Dendritic cell treated with granulocyte-macrophage colony-stimulating factor and Interleukin-4, amounts not matched to agents 40 ng/mL and 50 ng/mL, for 4 days (primary cell): ENCODE measurements at regions of chr6 and their contacts with region 1.

Region 1: DNA sequence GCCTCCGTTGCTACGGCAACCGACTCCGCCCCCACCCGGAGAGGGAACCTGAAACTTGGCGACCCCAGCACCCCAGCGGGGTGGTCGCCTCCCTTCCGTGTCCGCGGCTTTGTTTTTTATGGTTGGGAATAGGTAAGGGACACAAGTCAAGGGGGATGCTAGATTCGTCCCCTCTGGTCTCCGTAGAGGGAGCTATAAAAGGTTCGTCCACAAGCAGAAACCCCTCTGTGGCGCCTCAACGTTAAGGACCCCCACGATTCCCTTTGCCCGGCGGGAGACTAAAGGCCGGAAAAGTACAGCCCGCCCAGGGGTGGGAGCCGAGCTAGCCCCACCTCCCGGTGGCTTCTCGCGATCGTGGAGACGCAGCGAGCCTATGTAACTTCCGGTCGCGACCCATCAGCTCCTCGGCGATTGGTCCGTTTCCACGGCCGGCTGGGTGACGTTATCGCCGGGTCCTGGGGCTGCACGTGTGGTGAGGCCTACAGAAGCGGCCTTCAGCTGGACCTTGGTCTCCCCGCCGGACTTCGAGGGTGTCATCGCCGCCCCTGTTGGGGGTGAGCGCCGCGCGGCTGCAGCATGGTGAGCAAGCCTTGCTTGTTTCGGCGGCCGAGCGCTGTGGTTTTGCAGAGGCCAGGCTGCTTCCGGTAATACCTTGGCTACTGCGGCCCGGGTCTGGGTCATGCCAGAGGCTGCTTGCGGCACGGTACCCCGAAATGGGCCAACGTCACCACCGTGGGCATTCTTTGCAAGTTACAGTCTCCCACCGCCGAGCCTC is at the start of gene LTV1:
- H3K4me3 Mint-ChIP-seq: peak within 1 kb of the TSS; percentile 91
- H3K27ac Mint-ChIP-seq: peak within 1 kb of the TSS; percentile 95
- H3K4me1 Mint-ChIP-seq: peaks cover 16% of the 10 kb centered on the region
- H3K27me3 Mint-ChIP-seq: no peaks in the 10 kb centered on the region

Region 2: DNA sequence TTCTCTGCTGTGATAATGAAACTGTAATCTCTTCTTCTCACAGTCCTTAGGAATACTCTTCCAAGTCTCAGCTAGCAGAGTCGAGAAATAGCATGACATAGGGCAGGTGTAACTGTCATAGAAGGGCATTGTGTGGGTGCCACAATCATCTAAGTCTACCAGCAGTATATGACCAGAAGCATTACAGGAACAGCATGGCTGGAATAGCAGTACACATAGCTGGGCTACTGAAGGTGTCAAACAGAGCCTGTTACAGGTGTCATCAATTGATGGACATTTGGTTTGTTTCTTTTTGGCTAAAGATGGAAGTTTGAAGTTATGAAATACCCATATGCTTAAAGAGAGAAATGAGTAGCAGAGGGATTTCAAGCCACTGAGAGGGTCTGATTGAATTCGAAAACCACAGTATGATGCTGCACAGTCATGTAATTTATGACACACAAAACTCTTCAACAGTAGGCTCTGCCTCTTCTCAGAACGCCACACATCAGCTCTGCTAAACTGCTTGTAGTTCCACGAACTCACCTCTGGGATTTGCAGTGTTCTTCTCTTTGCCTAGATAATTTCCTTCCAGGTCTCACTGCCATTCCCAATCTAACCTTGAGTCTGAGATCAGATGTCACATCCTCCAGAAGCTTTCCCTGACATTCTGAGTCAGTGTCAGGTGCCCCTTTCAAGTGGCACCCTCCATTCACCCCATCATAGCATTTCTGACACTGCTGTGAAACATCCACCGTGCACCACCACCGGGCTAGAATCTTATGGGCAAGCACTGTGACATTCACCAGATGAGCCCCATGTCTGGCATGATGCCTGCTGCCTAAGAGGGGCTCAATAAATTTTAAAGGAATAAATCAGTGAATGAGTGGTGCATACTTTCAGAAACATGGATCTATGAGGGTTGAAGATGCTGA is 543.6 kb before region 1 on chr6:
- intact Hi-C with region 1: no loop called
- H3K4me3 Mint-ChIP-seq: no peak overlapping the region
- H3K27ac Mint-ChIP-seq: no peak overlapping the region
- H3K4me1 Mint-ChIP-seq: no peaks in the 10 kb centered on the region
- H3K27me3 Mint-ChIP-seq: no peaks in the 10 kb centered on the region

Region 3: DNA sequence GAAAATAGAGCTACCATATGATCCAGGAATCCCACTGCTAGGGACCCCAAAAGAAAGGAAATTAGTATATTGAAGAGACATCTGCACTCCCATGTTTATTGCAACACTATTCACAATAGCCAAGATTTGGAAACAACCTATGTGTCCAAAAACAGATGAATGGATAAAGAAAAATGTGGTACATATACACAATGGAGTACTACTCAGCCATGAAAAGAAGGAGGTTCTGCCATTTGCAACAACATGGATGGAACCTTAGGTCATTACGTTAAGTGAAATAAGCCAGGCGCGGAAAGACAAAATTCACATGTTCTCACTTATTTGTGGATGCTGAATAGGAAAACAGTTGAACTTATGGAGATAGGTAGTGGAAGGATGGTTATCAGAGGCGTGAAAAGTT is 529.9 kb before region 1 on chr6:
- intact Hi-C with region 1: no loop called
- H3K4me3 Mint-ChIP-seq: no peak overlapping the region
- H3K27ac Mint-ChIP-seq: no peak overlapping the region
- H3K4me1 Mint-ChIP-seq: no peaks in the 10 kb centered on the region
- H3K27me3 Mint-ChIP-seq: peaks cover 1% of the 10 kb centered on the region

Region 4: GRCh38 chr6:143510991-143511891 is 331.8 kb before region 1 on chr6 and contains the start of gene FUCA2:
- intact Hi-C with region 1: loop called (anchors 1 kb)
- H3K4me3 Mint-ChIP-seq: peak within 1 kb of the TSS; percentile 97
- H3K27ac Mint-ChIP-seq: peak within 1 kb of the TSS; percentile 96
- H3K4me1 Mint-ChIP-seq: peaks cover 70% of the 10 kb centered on the region
- H3K27me3 Mint-ChIP-seq: no peaks in the 10 kb centered on the region

Region 5: DNA sequence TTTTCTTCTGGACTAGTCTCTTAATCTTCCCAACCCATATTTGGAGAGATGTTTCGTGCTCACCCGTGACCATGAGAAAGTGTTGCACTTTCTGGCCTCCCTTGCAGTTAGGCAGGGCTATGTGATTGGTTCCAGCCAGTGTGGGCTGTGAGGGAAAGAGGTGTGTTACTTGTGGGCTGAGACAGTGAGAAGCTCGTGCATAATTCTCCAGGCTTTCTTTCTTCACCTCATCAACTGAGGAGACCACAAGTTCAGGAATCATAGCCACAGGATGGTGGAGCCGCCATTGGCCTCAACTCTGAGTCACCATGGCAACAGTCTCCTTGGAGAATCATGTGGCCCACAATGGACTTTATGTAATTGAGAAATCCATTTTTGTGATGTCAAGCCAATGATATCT is 274.0 kb before region 1 on chr6:
- intact Hi-C with region 1: loop called (anchors 2 kb)
- H3K4me3 Mint-ChIP-seq: no peak overlapping the region
- H3K27ac Mint-ChIP-seq: no peak overlapping the region
- H3K4me1 Mint-ChIP-seq: peaks cover 28% of the 10 kb centered on the region
- H3K27me3 Mint-ChIP-seq: no peaks in the 10 kb centered on the region

Region 6: DNA sequence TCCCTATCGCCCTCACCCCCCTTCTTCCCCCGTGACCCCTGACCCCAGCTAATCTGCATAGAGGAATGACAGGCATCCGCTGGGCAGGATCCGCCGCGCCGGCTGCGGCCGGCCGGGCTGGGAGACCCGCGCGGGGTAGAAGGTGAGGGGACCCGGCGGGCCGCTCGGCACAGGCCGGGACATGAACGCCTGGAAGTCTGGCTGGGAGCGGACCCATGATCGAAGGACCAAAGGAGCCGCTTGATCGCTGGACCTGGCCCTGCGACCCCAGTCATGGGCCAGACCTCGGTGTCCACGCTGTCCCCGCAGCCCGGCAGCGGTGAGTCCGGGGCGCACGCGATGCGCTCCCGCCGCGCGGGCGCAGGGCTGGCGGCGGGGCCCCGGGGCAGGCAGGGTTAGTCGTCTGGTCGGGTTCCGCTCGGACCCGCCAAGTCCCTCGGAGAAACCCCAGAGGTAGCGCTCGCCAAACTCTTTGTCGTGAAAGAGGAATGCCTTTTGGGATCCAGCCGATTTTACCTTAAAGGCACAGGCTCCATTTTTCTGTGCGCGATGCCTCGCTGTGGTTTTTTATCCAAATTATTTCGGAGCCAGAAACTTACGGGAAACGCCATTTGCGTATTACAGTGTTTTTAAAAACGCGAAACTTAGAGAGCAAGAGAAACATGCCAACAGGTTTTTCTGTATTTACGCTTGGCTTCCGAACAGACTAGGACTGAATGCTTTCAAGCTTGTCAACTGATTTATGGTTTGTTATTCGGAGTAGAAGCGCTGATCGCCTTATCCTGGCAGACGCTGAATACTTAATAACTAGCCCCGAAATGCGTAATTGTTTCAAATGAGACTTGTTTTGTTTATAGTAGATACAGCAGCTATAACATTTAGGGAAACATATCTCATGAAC is 164.9 kb before region 1 on chr6 and contains the start of gene PHACTR2:
- intact Hi-C with region 1: loop called (anchors 5 kb)
- H3K4me3 Mint-ChIP-seq: peak within 1 kb of the TSS; percentile 79
- H3K27ac Mint-ChIP-seq: peak within 1 kb of the TSS; percentile 70
- H3K4me1 Mint-ChIP-seq: peaks cover 15% of the 10 kb centered on the region
- H3K27me3 Mint-ChIP-seq: no peaks in the 10 kb centered on the region

Region 7: GRCh38 chr6:143806282-143807102 is 36.6 kb before region 1 on chr6:
- intact Hi-C with region 1: no loop called
- H3K4me3 Mint-ChIP-seq: no peak overlapping the region
- H3K27ac Mint-ChIP-seq: no peak overlapping the region
- H3K4me1 Mint-ChIP-seq: peaks cover 38% of the 10 kb centered on the region
- H3K27me3 Mint-ChIP-seq: no peaks in the 10 kb centered on the region

Region 8: DNA sequence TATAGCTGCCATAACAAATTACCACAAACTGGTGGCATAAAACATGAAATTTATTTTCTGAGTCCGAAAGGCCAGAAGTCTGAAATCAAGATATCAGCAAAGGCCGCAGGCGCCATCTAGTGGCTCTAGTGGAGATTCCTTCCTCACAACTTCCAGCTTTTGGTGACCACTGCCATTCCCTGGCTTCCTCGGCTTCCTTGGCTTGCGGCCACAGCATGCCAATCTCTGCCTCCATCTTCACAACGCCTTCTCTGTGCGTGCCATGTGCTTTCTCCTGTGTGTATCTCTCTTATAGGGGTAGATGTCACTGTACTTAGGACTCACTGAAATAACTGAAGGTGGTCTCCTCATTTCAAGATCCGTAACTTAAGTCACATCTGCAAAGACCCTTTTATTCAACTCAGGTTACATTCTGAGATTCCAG is 170.4 kb after region 1 on chr6:
- intact Hi-C with region 1: loop called (anchors 10 kb)
- H3K4me3 Mint-ChIP-seq: no peak overlapping the region
- H3K27ac Mint-ChIP-seq: no peak overlapping the region
- H3K4me1 Mint-ChIP-seq: peaks cover 18% of the 10 kb centered on the region
- H3K27me3 Mint-ChIP-seq: peaks cover 1% of the 10 kb centered on the region